ENCODE measurements at regions of chr14 and their contacts with region 1.

Region 1: GRCh38 chr14:72904840-72905561 is 11.1 kb upstream of the DPF3 start:
- DNase-seq: peak; percentile 54 to 73
- ATAC-seq: peak; percentile 42 to 68 (median 48)
- H3K4me3 ChIP-seq: no peak overlapping the region
- H3K27ac ChIP-seq: peak overlapping the region; percentile 7
- H3K4me1 ChIP-seq: peaks cover 41% of the 10 kb centered on the region
- H3K27me3 ChIP-seq: no peaks in the 10 kb centered on the region
- CTCF ChIP-seq: peak; percentile 93

Region 2: GRCh38 chr14:72516936-72517700 is 387.9 kb before region 1 on chr14:
- intact Hi-C with region 1: loop called (anchors 1 to 5 kb)
- DNase-seq: peak; percentile 63 to 65
- ATAC-seq: peak; percentile 84 to 92 (median 86)
- H3K4me3 ChIP-seq: no peak overlapping the region
- H3K27ac ChIP-seq: no peak overlapping the region
- H3K4me1 ChIP-seq: peaks cover 2% of the 10 kb centered on the region
- H3K27me3 ChIP-seq: no peaks in the 10 kb centered on the region
- CTCF ChIP-seq: peak; percentile 87

Region 3: GRCh38 chr14:72745991-72746980 is 158.7 kb before region 1 on chr14:
- intact Hi-C with region 1: loop called in 1 of 2 experiments (anchors 5 kb)
- DNase-seq: peak; percentile 50 to 73
- ATAC-seq: peak; percentile 64 to 89 (median 85)
- H3K4me3 ChIP-seq: no peak overlapping the region
- H3K27ac ChIP-seq: peak overlapping the region; percentile 27
- H3K4me1 ChIP-seq: peaks cover 27% of the 10 kb centered on the region
- H3K27me3 ChIP-seq: no peaks in the 10 kb centered on the region
- CTCF ChIP-seq: no peak

Region 4: DNA sequence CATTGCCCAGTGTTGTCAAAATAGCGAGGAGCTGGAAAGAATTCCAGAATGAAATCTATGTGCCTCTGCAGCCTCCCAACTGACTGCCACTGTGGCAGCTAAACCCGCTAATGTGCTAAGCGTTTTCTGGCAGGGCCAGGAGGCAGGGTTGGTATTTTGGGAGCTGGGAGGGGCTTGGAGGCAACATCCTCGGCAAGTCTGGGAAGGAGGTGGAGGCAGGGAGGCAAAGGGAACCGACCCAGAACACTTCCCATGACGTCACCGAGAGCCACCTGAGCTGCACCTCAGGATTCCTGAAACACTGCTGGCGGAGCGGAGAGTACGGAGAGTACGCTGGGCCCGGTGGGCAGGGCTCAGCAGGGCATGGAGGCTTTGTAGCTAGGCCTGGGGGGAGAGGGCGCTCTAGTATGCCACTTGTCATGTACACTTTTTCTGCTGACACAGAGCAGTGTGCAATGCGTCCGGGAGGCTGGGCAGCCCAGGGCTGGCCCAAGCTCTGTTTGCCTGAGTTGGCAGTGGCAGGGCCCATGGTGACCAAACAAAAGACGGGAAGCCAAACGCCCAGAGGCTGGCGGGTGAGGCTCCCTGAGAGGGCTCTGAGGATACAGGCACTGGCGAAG is 92.6 kb before region 1 on chr14:
- intact Hi-C with region 1: loop called in 1 of 2 experiments (anchors 5 kb)
- DNase-seq: peak; percentile 84 to 95
- ATAC-seq: peak; percentile 91 to 94 (median 92)
- H3K4me3 ChIP-seq: peak overlapping the region; percentile 33
- H3K27ac ChIP-seq: peak overlapping the region; percentile 87
- H3K4me1 ChIP-seq: peaks cover 72% of the 10 kb centered on the region
- H3K27me3 ChIP-seq: no peaks in the 10 kb centered on the region
- CTCF ChIP-seq: no peak